AG04450 (cell line): ENCODE measurements at regions of chr11 and their contacts with region 1.

Region 1: GRCh38 chr11:6619004-6619745 is at the start of gene TPP1:
- DNase-seq: peak; percentile 86
- H3K4me3 ChIP-seq: peak within 1 kb of the TSS; percentile 93
- H3K27ac ChIP-seq: peak within 1 kb of the TSS; percentile 73
- H3K27me3 ChIP-seq: peaks cover 2% of the 10 kb centered on the region
- CTCF ChIP-seq: no peak
- polyA plus RNA-seq, gene TPP1: 128 and 152 TPM in 2 replicates

Region 2: GRCh38 chr11:6333112-6333511 is 286.1 kb before region 1 on chr11:
- CTCF ChIA-PET with region 1: no interaction called
- POLR2A ChIA-PET with region 1: interaction called, 11 read pairs
- DNase-seq: no peak
- H3K4me3 ChIP-seq: no peak overlapping the region
- H3K27ac ChIP-seq: no peak overlapping the region
- H3K27me3 ChIP-seq: peaks cover 2% of the 10 kb centered on the region
- CTCF ChIP-seq: no peak

Region 3: DNA sequence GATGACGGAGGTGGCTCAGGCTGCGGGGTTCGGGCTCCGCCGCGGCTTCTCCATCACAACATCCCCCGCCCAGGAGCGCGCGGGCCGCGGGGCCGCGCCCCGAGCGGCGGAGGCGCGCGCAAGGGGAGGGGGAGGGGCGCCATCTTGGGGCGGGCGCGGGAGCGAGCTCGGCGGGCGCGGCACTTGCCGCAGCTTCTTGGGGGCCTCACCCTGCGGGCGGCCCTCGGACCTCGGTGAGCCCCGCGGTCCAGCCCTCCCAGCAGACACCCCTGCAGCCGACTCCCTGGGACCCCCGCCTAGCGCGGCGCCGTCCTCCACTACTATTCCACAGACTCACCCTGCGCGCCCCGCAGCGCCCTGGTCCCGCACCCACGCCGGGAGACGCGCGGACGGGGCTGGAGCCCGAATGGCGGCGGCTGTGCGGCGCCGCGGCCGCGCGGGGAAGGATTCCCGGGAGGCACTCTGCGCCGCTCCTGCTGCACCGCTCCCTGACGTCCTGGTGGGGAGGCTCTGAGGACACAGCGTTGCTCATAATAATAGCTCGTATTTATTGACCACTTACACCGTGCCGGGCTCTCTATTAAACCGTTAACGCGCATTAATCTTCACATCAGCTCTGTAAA is 200.1 kb before region 1 on chr11 and contains the start of gene APBB1:
- CTCF ChIA-PET with region 1: no interaction called
- POLR2A ChIA-PET with region 1: no interaction called
- DNase-seq: no peak
- H3K4me3 ChIP-seq: peak within 1 kb of the TSS; percentile 80
- H3K27ac ChIP-seq: no peak within 1 kb of the TSS
- H3K27me3 ChIP-seq: no peaks in the 10 kb centered on the region
- CTCF ChIP-seq: 0 out of 2 replicates have a peak, but pooled peaks have one; percentile 8
- polyA plus RNA-seq, gene APBB1: 42.2 and 54.5 TPM in 2 replicates

Region 4: GRCh38 chr11:6603287-6604080 is 15.7 kb before region 1 on chr11 and contains the starts of genes ILK and RRP8:
- CTCF ChIA-PET with region 1: interaction called, 14 read pairs
- POLR2A ChIA-PET with region 1: interaction called, 12 read pairs
- DNase-seq: peak; percentile 66
- H3K4me3 ChIP-seq: peak within 1 kb of the TSS; percentile 99
- H3K27ac ChIP-seq: peak within 1 kb of the TSS; percentile 89
- H3K27me3 ChIP-seq: no peaks in the 10 kb centered on the region
- CTCF ChIP-seq: peak; percentile 22; the same call in 1 of the 2 replicates
- polyA plus RNA-seq, gene ILK: 362 and 417 TPM in 2 replicates
- polyA plus RNA-seq, gene RRP8: 13.7 and 16.3 TPM in 2 replicates